H1 (cell line): ENCODE measurements at regions of chr16 and their contacts with region 1.

Region 1: GRCh38 chr16:89490387-89491237 is at the start of gene ANKRD11:
- DNase-seq: peak; percentile 97 to 99
- H3K4me3 ChIP-seq: peak within 1 kb of the TSS; percentile 77 to 91 (median 88)
- H3K27ac ChIP-seq: peak within 1 kb of the TSS; percentile 56; the same call in 1 of the 2 replicates
- H3K4me1 ChIP-seq: peaks cover 6 to 19% (median 10%) of the 10 kb centered on the region in 4 experiments
- H3K27me3 ChIP-seq: no peaks in the 10 kb centered on the region
- CTCF ChIP-seq: no peak
- EP300 ChIP-seq: peak in 1 of 2 experiments; percentile 45; a peak in 1 of 3 replicates
- POLR2A ChIP-seq: peak; percentile 63 to 81
- RAD21 ChIP-seq: no peak
- total RNA-seq, gene ANKRD11: 136 and 142 TPM in 2 replicates

Region 2: DNA sequence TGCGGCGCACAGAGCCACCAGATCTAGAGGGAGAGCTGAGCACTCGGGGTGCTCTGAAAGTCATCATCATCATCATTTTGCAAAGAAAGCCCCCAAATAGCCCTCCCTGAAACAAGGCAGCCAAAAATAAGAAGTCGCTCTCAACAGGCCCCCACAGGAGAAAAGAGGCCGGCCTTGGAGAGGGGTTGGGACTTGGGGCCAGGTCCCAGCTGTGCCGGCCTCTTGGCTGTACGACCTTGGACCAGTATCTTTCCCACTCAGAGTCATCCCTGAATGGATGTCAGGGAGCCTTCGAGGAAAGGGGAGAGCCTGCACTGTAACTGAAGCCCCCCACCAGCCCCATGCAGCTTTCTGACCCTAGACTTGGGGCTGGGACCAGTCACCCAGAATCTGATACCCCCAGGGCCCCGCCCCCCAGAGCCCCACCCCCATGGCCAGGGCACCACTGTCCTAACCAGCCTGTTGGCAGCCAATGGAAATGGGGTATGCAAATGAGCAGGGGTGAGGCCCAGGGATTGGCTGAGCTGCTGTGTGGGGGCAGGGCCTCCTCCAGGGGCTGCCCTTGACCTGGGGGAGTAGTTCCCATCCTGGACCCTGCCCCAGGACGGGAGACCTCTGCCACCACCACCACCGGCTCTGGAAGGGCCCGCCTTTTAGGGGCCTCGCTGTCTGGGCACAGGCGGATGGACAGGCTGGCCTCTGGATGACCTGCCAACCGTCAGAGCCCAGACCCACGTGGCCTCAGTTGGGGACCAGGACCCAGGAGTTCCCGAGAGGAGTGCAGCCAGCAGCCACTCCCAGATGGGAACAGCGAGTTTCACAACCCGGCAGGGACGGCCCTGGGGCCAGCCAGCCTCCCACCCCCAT is 1022.1 kb before region 1 on chr16:
- CTCF ChIA-PET with region 1: no interaction called
- POLR2A ChIA-PET with region 1: no interaction called
- DNase-seq: peak; percentile 67 to 90
- H3K4me3 ChIP-seq: peak overlapping the region in 2 of 4 experiments; percentile 4 to 47; a peak in 2 of 8 replicates
- H3K27ac ChIP-seq: no peak overlapping the region
- H3K4me1 ChIP-seq: peaks cover 0 to 9% (median 4%) of the 10 kb centered on the region in 4 experiments; a peak in 5 of 7 replicates
- H3K27me3 ChIP-seq: no peaks in the 10 kb centered on the region
- CTCF ChIP-seq: no peak
- EP300 ChIP-seq: no peak
- POLR2A ChIP-seq: no peak
- RAD21 ChIP-seq: no peak

Region 3: DNA sequence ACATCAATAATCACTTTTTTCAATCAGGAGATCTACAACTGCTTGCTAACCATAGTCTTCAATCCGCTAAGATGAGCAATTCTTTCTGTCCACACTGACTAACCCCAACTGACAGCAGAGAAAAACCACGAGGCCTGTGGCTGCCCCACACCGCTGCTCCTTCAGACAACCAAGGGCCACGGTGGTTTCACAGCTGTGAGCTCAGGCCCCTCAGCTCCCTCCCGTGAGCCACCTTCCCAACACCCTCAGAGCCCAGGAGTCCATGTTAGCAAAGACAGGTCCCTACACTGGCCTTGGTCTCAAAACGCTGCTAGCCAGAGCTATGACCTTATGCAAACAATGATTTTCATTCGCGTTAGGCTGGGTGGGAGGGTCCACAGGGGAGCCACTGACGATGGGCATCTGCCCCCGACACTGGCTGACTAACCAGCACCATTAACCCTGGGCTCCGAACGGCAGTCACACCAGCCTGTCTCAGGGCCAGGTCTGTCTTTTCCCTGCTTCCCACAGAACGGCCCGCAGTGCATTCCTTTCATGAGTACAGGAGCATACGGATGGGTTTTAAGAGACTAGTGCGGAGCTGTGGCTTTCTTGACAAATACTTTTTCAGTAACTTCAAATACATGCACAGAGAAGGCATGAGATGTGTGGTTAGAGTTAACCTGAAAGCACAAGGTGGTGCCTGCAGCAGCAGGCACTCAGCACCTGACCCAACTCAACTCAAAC is 67.5 kb before region 1 on chr16:
- CTCF ChIA-PET with region 1: interaction called, 4 read pairs
- POLR2A ChIA-PET with region 1: interaction called, 11 read pairs
- DNase-seq: no peak
- H3K4me3 ChIP-seq: no peak overlapping the region
- H3K27ac ChIP-seq: no peak overlapping the region
- H3K4me1 ChIP-seq: peaks cover 6 to 30% (median 17%) of the 10 kb centered on the region in 4 experiments; a peak in 6 of 7 replicates
- H3K27me3 ChIP-seq: no peaks in the 10 kb centered on the region
- CTCF ChIP-seq: no peak
- EP300 ChIP-seq: no peak
- POLR2A ChIP-seq: no peak
- RAD21 ChIP-seq: no peak

Region 4: DNA sequence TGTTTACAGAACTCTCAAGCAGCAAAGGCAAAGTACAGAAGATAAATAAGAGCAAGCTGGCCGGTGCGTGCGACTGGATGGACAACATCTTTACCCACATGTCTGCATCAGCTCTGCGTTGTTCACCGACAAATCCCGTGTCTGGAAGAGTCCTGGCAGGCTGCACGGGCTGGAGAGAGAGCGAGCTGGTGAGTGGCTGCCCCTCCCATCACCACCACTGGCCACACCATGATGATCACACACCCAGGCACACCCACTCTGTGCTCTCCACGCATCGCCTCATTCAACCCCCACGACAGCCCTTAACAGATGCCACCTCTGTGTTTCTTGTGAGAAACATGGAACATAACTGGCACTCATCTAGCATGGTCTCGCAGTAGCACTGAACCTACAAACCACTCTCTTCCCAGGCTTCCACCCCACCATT is 59.4 kb before region 1 on chr16:
- CTCF ChIA-PET with region 1: interaction called, 4 read pairs
- POLR2A ChIA-PET with region 1: interaction called, 21 read pairs
- DNase-seq: no peak
- H3K4me3 ChIP-seq: no peak overlapping the region
- H3K27ac ChIP-seq: no peak overlapping the region
- H3K4me1 ChIP-seq: peaks cover 3 to 23% (median 15%) of the 10 kb centered on the region in 4 experiments
- H3K27me3 ChIP-seq: no peaks in the 10 kb centered on the region
- CTCF ChIP-seq: no peak
- EP300 ChIP-seq: no peak
- POLR2A ChIP-seq: no peak
- RAD21 ChIP-seq: no peak

Region 5: DNA sequence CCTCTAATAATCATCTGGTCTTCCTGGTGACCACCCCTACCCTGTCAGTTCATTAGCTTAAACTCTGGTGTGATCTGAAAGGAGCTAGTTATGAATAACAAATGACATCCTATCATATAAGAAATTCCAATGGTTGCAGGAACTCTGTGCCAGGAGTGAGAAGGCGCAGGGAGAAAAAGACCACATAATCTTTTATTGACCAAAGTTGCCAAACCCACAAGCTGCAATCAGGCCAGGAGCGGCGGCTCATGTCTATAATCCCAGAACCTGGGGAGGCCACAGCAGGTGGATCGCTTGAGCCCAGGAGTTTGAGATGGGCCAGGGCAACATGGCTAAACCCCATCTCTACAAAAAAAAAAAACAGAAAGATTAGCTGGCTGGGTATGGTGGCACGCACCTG is 23.7 kb before region 1 on chr16:
- CTCF ChIA-PET with region 1: no interaction called
- POLR2A ChIA-PET with region 1: interaction called, 19 read pairs
- DNase-seq: no peak
- H3K4me3 ChIP-seq: no peak overlapping the region
- H3K27ac ChIP-seq: no peak overlapping the region
- H3K4me1 ChIP-seq: peaks cover 4 to 10% (median 7%) of the 10 kb centered on the region in 4 experiments; a peak in 5 of 7 replicates
- H3K27me3 ChIP-seq: no peaks in the 10 kb centered on the region
- CTCF ChIP-seq: no peak
- EP300 ChIP-seq: no peak
- POLR2A ChIP-seq: no peak
- RAD21 ChIP-seq: no peak

Region 6: GRCh38 chr16:89476804-89477261 is 13.8 kb before region 1 on chr16:
- CTCF ChIA-PET with region 1: interaction called, 5 read pairs
- POLR2A ChIA-PET with region 1: interaction called, 26 read pairs
- DNase-seq: no peak
- H3K4me3 ChIP-seq: no peak overlapping the region
- H3K27ac ChIP-seq: no peak overlapping the region
- H3K4me1 ChIP-seq: peaks cover 3 to 17% (median 10%) of the 10 kb centered on the region in 4 experiments
- H3K27me3 ChIP-seq: no peaks in the 10 kb centered on the region
- CTCF ChIP-seq: no peak
- EP300 ChIP-seq: no peak
- POLR2A ChIP-seq: no peak
- RAD21 ChIP-seq: no peak

Region 7: DNA sequence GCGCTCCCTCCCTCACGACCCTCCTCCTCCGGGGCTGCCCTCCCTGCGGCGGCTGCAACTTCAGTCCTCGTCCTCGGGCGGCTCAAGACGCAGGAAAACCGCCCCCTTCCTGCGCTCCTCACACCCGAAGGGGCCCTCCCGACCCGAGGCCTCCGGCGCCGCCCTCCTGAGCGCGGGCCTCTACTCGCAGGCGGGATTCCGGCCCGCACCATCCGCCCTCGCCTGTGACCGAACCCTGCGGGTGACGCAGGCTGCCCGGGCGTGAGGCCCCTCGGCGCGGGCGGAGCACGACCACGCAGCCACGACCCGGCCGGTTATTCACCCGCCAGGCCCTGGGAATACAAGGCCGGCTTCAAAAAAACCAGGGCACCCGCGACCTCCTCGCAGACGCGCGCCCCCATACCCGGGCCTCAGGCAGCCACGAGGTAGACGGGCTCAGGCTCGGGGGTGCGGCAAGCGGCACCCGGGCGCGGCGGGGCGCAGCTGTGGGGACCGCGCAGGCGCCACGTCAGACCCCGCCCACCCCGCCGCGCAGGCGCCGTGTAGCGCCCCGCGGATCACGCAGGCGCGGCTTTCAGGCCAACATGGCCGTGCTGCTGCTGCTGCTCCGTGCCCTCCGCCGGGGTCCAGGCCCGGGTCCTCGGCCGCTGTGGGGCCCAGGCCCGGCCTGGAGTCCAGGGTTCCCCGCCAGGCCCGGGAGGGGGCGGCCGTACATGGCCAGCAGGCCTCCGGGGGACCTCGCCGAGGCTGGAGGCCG is 17.4 kb after region 1 on chr16 and contains the start of gene SPG7:
- CTCF ChIA-PET with region 1: interaction called, 4 read pairs
- POLR2A ChIA-PET with region 1: interaction called, 56 read pairs
- DNase-seq: peak in 1 of 2 experiments; percentile 95
- H3K4me3 ChIP-seq: peak within 1 kb of the TSS; percentile 91 to 95 (median 94)
- H3K27ac ChIP-seq: peak within 1 kb of the TSS; percentile 82
- H3K4me1 ChIP-seq: peaks cover 0 to 4% (median 0%) of the 10 kb centered on the region in 4 experiments; a peak in 4 of 7 replicates
- H3K27me3 ChIP-seq: peaks cover 0 to 4% (median 2%) of the 10 kb centered on the region in 4 experiments; a peak in 3 of 7 replicates
- CTCF ChIP-seq: 0 out of 4 replicates have a peak, but pooled peaks of 1 of the 3 experiments have one; percentile 3
- EP300 ChIP-seq: no peak
- POLR2A ChIP-seq: peak; percentile 83 to 88
- RAD21 ChIP-seq: no peak; a peak in 1 of 4 replicates
- total RNA-seq, gene SPG7: 109 and 113 TPM in 2 replicates

Region 8: GRCh38 chr16:89531821-89532526 is 41.4 kb after region 1 on chr16:
- CTCF ChIA-PET with region 1: no interaction called
- POLR2A ChIA-PET with region 1: no interaction called
- DNase-seq: no peak
- H3K4me3 ChIP-seq: no peak overlapping the region
- H3K27ac ChIP-seq: no peak overlapping the region
- H3K4me1 ChIP-seq: no peaks in the 10 kb centered on the region
- H3K27me3 ChIP-seq: no peaks in the 10 kb centered on the region
- CTCF ChIP-seq: no peak
- EP300 ChIP-seq: no peak
- POLR2A ChIP-seq: no peak
- RAD21 ChIP-seq: no peak